ENCODE measurements at regions of chr5 and their contacts with region 1.

Region 1: GRCh38 chr5:14351845-14352712 is 208.9 kb downstream of the TRIO start:
- DNase-seq: peak; percentile 62
- H3K4me3 Mint-ChIP-seq: no peak overlapping the region
- H3K27ac Mint-ChIP-seq: no peak overlapping the region
- H3K4me1 Mint-ChIP-seq: no peaks in the 10 kb centered on the region
- H3K27me3 Mint-ChIP-seq: no peaks in the 10 kb centered on the region
- CTCF ChIP-seq: peak; percentile 87

Region 2: DNA sequence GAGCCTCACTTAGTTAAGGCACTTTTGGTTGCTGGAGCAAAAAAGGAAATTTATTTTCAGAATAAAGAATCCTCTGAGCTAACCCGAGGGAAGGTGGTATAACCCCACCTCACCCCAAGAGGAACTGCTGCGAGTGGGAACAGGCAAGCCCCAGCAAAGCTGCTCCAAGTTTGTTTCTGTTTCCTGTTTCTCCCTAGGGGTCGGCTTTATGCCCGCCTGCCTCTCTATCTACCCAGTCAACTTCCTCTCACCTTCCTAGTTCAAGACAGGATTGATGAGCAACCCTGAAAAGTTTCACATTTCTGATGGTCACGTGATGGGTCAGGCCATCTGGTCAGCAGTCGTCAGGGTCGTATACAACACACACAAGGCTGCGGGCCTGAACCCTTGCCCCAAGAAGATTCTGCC is 177.8 kb before region 1 on chr5:
- CTCF ChIA-PET with region 1: no interaction called
- POLR2A ChIA-PET with region 1: no interaction called
- intact Hi-C with region 1: no loop called
- DNase-seq: no peak
- H3K4me3 Mint-ChIP-seq: no peak overlapping the region
- H3K27ac Mint-ChIP-seq: peak overlapping the region; percentile 90
- H3K4me1 Mint-ChIP-seq: peaks cover 45% of the 10 kb centered on the region
- H3K27me3 Mint-ChIP-seq: no peaks in the 10 kb centered on the region
- CTCF ChIP-seq: no peak

Region 3: GRCh38 chr5:14337593-14337992 is 14.5 kb before region 1 on chr5:
- CTCF ChIA-PET with region 1: interaction called, 14 read pairs
- POLR2A ChIA-PET with region 1: no interaction called
- intact Hi-C with region 1: no loop called
- DNase-seq: no peak
- H3K4me3 Mint-ChIP-seq: no peak overlapping the region
- H3K27ac Mint-ChIP-seq: no peak overlapping the region
- H3K4me1 Mint-ChIP-seq: no peaks in the 10 kb centered on the region
- H3K27me3 Mint-ChIP-seq: no peaks in the 10 kb centered on the region
- CTCF ChIP-seq: no peak

Region 4: DNA sequence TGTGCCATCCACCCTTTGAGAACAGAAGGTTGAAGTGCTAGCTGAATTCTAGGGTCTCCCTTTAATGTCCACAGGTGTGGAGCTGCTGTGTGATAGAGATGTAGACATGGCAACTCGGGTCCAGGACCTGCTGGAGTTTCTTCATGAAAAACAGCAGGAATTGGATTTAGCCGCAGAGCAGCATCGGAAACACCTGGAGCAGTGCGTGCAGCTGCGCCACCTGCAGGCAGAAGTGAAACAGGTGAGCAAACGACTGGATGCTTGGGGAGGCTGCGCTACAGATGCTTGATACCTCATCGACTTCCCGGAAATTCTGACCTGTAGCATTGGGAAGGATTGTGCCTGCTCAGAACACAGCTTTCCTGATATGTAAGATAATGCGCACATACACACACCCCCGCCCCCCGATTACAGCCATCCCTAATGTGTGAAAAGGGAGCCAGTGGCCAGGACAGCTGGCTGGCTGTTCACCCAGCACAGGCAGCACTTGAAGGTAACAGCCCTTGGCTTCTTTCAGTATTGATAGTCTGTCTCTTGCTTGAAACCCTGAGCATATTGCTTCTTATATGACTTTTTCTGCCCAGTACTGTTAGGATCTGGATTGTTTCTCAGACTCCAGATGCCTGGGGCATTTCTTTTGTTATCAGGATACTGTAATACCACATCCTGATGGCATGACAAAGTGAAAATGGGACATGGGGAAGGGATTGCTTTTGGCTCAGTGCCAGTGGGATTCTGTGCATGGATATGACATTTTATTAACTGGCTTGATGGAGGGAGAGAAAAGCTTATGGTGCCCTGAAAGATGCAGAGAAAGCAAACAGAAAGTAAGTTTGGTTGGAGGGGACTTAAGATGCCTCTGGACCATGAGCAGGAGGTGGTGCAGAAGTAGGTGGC is 12.7 kb after region 1 on chr5:
- CTCF ChIA-PET with region 1: interaction called, 43 read pairs
- POLR2A ChIA-PET with region 1: no interaction called
- intact Hi-C with region 1: no loop called
- DNase-seq: peak; percentile 53
- H3K4me3 Mint-ChIP-seq: no peak overlapping the region
- H3K27ac Mint-ChIP-seq: no peak overlapping the region
- H3K4me1 Mint-ChIP-seq: no peaks in the 10 kb centered on the region
- H3K27me3 Mint-ChIP-seq: no peaks in the 10 kb centered on the region
- CTCF ChIP-seq: peak; percentile 50

Region 5: GRCh38 chr5:14374100-14374499 is 22.0 kb after region 1 on chr5:
- CTCF ChIA-PET with region 1: interaction called, 13 read pairs
- POLR2A ChIA-PET with region 1: no interaction called
- intact Hi-C with region 1: no loop called
- DNase-seq: no peak
- H3K4me3 Mint-ChIP-seq: no peak overlapping the region
- H3K27ac Mint-ChIP-seq: no peak overlapping the region
- H3K4me1 Mint-ChIP-seq: no peaks in the 10 kb centered on the region
- H3K27me3 Mint-ChIP-seq: no peaks in the 10 kb centered on the region
- CTCF ChIP-seq: no peak

Region 6: GRCh38 chr5:14716755-14717752 is 365.0 kb after region 1 on chr5:
- CTCF ChIA-PET with region 1: no interaction called
- POLR2A ChIA-PET with region 1: no interaction called
- intact Hi-C with region 1: no loop called
- DNase-seq: no peak
- H3K4me3 Mint-ChIP-seq: no peak overlapping the region
- H3K27ac Mint-ChIP-seq: peak overlapping the region; percentile 47
- H3K4me1 Mint-ChIP-seq: peaks cover 5% of the 10 kb centered on the region
- H3K27me3 Mint-ChIP-seq: no peaks in the 10 kb centered on the region
- CTCF ChIP-seq: no peak